ENCODE measurements at regions of chr15 and their contacts with region 1.

Region 1: DNA sequence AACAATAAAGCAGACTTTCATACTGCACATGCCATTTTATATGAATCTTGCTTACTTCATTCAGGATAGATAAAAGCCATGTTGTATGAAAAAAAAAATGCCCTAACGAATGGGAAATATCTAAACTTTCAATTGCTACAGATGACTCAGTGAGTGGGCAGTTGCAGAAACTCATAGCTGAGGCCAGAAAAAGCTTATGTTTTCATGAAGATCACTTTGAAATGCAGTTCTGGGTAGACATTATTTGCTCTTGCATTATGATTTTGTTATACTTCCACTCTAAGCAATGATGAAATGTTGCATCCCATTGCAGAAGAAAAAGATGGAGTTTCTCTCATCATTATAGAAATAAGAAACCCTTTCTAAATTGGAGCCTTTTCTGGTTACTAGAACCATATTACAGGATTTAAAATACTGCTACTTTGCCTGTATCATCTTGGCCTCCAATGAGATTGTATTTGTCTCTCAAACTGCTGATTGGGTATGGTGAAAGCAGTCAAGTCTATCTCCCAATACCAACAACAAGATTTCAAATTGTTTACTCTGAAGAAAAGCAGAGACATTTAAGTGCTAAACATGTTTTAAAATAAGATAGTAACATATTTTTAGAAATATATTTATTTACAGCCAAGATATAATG is 17.0 kb downstream of the PEAK1 start:
- DNase-seq: no peak
- H3K4me3 Mint-ChIP-seq: no peak overlapping the region
- H3K27ac Mint-ChIP-seq: peak overlapping the region; percentile 33
- H3K4me1 Mint-ChIP-seq: peaks cover 37% of the 10 kb centered on the region
- H3K27me3 Mint-ChIP-seq: no peaks in the 10 kb centered on the region

Region 2: GRCh38 chr15:77358545-77359240 is 44.2 kb before region 1 on chr15:
- intact Hi-C with region 1: loop called (anchors 5 kb)
- DNase-seq: no peak
- H3K4me3 Mint-ChIP-seq: no peak overlapping the region
- H3K27ac Mint-ChIP-seq: no peak overlapping the region
- H3K4me1 Mint-ChIP-seq: peaks cover 8% of the 10 kb centered on the region
- H3K27me3 Mint-ChIP-seq: no peaks in the 10 kb centered on the region

Measured in activated T-helper 2 cell treated with anti-CD3 and anti-CD28 coated beads, Interferon-gamma antibody, Interleukin-2, Interleukin-4, amounts not matched to agents 10 μg/mL and 5 μg/mL and 100 μg/mL, durations not matched to agents 14 hours and 24 hours and 36 hours (primary cell).